Prostate gland (tissue), 2 donors: ENCODE measurements at regions of chr16 and their contacts with region 1.

Region 1: GRCh38 chr16:4693296-4693955 is at the start of gene NUDT16L1:
- DNase-seq: peak; percentile 96
- H3K4me3 ChIP-seq: peak within 1 kb of the TSS; percentile 90 to 99
- H3K27ac ChIP-seq: peak within 1 kb of the TSS; percentile 82 to 89
- H3K4me1 ChIP-seq: peaks cover 13% of the 10 kb centered on the region
- H3K27me3 ChIP-seq: no peaks in the 10 kb centered on the region
- CTCF ChIP-seq: peak in 2 of 4 experiments; percentile 73 to 74
- POLR2A ChIP-seq: peak; percentile 67
- total RNA-seq, gene NUDT16L1: 57.4 to 75.3 TPM

Region 2: DNA sequence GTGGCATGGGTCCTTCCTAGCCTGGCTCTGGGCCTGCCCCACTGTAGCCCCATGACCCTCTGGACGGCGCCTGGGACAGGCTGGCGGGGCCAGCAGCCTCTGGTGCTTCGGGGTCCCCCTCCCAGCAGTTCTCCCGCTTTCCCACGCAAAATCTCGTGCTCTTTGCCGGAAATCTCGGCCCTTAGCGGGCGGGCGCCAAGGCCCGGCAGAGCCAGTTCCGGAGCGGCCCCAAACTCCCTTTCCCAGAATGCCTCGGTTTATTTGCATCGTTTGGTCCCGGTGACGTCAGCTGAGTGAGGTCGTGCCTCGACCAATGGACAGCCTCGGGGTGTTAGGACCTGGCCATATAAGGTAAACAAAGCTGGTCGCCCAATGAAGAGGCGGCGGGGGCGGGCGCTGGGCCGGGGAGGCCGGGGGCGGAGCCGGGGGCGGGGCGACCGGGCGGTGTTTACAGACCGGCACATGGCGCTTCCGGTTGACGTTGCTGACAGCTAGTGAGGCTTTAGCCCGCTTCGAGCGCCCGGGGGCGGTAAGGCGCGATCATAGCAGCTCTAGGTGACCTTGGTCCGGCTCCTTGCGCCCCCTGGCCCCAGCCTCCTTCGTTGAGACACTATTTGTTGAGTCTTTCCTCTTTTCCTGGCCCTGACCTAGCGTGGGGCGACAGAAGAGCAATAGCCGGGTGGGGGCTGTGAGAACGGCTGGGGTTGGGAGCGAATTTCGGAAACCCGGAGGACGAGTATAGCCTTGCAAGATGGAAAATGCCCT is 77.2 kb before region 1 on chr16:
- intact Hi-C with region 1: loop called (anchors 5 kb)
- DNase-seq: peak; percentile 100
- H3K4me3 ChIP-seq: peak overlapping the region; percentile 56 to 59
- H3K27ac ChIP-seq: peak overlapping the region; percentile 100
- H3K4me1 ChIP-seq: peaks cover 24% of the 10 kb centered on the region
- H3K27me3 ChIP-seq: no peaks in the 10 kb centered on the region
- CTCF ChIP-seq: peak in 3 of 4 experiments; percentile 32 to 44 (median 41)
- POLR2A ChIP-seq: peak; percentile 87